Heart left ventricle (tissue), 16 donors: ENCODE measurements at regions of chr10 and their contacts with region 1.

Region 1: DNA sequence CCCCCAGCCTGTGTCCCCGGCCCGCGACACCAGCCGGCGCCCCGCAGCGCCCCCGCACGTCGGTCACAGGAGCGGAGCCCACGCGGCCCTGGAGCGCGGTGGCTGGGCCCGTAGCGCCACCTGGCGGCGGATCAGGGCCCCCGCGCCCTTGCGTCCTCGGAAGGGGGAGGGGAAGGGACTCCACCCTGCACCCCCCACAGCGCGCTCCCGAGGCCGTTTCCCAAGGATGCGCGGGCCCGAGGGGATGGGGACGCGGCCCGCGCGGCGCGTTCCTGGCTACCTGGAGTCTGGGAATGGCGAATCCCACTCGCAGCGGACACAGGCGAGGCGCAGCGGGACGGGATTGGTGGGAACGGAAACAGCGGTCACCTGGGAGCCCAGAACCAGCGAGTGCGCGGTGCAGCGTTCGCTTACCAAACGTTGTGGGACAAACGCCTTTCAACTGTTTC is 23.8 kb upstream of the MKI67 start:
- DNase-seq: peak; percentile 50 to 87 (median 61)
- ATAC-seq: peak; percentile 58 to 97 (median 96)
- H3K4me3 ChIP-seq: peak overlapping the region in 11 of 12 donors; percentile 22 to 65 (median 50)
- H3K27ac ChIP-seq: no peak overlapping the region
- H3K4me1 ChIP-seq: peaks cover 0 to 12% (median 3%) of the 10 kb centered on the region in 12 donors
- H3K27me3 ChIP-seq: peaks cover 0 to 38% (median 10%) of the 10 kb centered on the region in 9 donors
- CTCF ChIP-seq: peak; percentile 68 to 87 (median 76)
- POLR2A ChIP-seq: no peak

Region 2: DNA sequence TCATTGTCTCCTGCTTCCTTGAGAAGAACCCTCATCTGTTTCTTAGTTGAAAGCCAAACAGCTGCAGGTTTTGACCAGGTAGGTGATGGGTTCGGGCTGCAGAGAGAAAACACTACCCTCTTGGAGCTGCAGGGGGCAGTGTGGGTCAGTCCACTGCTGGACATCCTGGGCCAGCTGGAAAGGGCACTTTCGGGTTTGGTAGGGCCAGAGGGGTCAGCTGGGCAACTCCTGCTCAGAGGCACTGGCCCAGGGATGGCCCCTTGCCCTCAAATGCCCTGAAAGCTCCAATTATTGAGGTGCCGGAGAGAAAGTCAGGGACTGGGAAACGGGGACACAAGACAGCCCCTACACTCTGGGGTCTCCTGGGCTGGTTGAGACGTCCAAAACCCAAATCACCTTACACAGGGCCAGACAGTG is 114.5 kb before region 1 on chr10:
- intact Hi-C with region 1: no loop called
- DNase-seq: peak in 4 of 5 donors; percentile 47 to 75 (median 58)
- ATAC-seq: peak in 3 of 4 donors; percentile 53 to 74 (median 73)
- H3K4me3 ChIP-seq: no peak overlapping the region
- H3K27ac ChIP-seq: no peak overlapping the region
- H3K4me1 ChIP-seq: peaks cover 0 to 15% (median 3%) of the 10 kb centered on the region in 12 donors
- H3K27me3 ChIP-seq: no peaks in the 10 kb centered on the region
- CTCF ChIP-seq: peak; percentile 66 to 82 (median 70)
- POLR2A ChIP-seq: no peak

Region 3: DNA sequence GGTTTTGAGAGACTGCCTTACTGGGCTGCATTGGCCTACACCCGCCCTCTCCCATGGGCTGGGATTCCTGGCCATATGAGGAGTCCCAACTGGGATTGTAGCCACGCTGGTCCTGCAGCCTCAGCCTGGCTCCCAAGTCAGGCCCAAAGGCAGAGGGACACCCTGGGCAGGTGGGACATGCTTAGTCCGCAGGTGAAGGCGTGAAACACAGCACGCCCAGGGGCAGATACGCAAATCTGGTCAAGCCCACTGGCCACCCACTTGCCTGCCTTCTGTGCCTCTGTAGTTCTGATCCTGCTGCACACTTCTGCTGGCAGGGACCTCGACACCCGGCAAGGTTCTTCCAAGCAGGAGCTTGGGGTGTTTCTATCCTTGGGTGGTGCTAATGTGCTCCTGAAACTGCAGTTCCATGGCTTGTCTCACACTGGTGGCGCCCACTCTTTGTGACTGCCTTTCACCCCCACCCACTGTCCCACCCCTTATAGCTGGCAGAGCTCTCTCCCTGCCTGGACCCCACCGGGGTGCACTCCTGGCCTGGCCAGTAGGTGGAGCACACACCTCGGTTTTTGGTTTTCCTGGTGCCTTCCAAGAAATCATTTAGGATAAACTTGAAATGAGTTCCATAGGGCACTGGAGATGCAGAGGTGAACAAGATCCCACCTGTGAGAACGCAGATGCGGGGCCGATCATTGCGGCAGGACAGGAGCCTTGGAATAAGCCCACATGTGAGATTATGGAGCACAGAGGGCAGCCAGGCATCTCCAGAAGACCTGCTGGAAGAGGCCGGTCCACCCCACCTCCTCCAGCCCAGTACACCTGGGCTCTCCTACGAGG is 71.7 kb before region 1 on chr10:
- intact Hi-C with region 1: loop called in 6 of 10 experiments (anchors 2 to 10 kb)
- DNase-seq: no peak
- ATAC-seq: peak in 3 of 4 donors; percentile 47 to 65 (median 64)
- H3K4me3 ChIP-seq: no peak overlapping the region
- H3K27ac ChIP-seq: no peak overlapping the region
- H3K4me1 ChIP-seq: no peaks in the 10 kb centered on the region
- H3K27me3 ChIP-seq: no peaks in the 10 kb centered on the region
- CTCF ChIP-seq: peak; percentile 41 to 66 (median 56)
- POLR2A ChIP-seq: no peak

Region 4: GRCh38 chr10:128087884-128088709 is 62.0 kb before region 1 on chr10:
- intact Hi-C with region 1: loop called in 4 of 10 experiments (anchors 5 to 10 kb)
- DNase-seq: no peak
- ATAC-seq: no peak
- H3K4me3 ChIP-seq: no peak overlapping the region
- H3K27ac ChIP-seq: no peak overlapping the region
- H3K4me1 ChIP-seq: no peaks in the 10 kb centered on the region
- H3K27me3 ChIP-seq: peaks cover 0 to 7% (median 0%) of the 10 kb centered on the region in 9 donors
- CTCF ChIP-seq: no peak
- POLR2A ChIP-seq: no peak

Region 5: GRCh38 chr10:128098631-128099030 is 51.4 kb before region 1 on chr10:
- intact Hi-C with region 1: no loop called
- DNase-seq: no peak
- ATAC-seq: no peak
- H3K4me3 ChIP-seq: no peak overlapping the region
- H3K27ac ChIP-seq: no peak overlapping the region
- H3K4me1 ChIP-seq: peaks cover 0 to 6% (median 0%) of the 10 kb centered on the region in 12 donors
- H3K27me3 ChIP-seq: no peaks in the 10 kb centered on the region
- CTCF ChIP-seq: no peak
- POLR2A ChIP-seq: no peak